Sigmoid colon (tissue), 7 donors: ENCODE measurements at regions of chr9 and their contacts with region 1.

Region 1: GRCh38 chr9:129131300-129132145 is 20.3 kb downstream of the PTPA start:
- DNase-seq: peak; percentile 90
- H3K4me3 ChIP-seq: no peak overlapping the region
- H3K27ac ChIP-seq: peak overlapping the region in 1 of 4 donors; percentile 26
- H3K4me1 ChIP-seq: peaks cover 0 to 6% (median 2%) of the 10 kb centered on the region in 4 donors
- H3K27me3 ChIP-seq: no peaks in the 10 kb centered on the region
- CTCF ChIP-seq: peak; percentile 92 to 99 (median 96)
- EP300 ChIP-seq: no peak
- POLR2A ChIP-seq: no peak

Region 2: DNA sequence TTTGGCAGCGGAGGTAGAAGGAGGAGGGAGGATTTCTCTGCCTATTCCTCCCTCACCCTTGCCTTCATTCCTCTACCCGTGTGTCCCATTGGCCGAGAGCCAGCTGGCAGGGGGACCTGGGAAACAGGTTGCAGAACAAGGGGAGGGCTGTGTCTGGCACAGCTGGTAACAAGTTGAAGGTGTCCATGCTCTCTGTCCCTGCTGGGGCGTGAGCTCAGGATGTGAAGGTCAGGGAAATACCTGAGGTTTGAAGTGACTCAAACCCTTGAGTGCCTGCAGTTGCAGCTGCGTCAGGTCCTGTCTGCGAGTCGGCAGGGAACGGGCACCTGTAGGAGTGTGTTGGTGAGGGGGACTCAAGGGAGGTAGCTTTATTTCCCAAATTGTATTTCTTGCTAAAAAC is 78.9 kb before region 1 on chr9:
- intact Hi-C with region 1: no loop called
- DNase-seq: no peak
- H3K4me3 ChIP-seq: no peak overlapping the region
- H3K27ac ChIP-seq: no peak overlapping the region
- H3K4me1 ChIP-seq: no peaks in the 10 kb centered on the region
- H3K27me3 ChIP-seq: no peaks in the 10 kb centered on the region
- CTCF ChIP-seq: no peak
- EP300 ChIP-seq: no peak
- POLR2A ChIP-seq: no peak

Region 3: GRCh38 chr9:129242941-129243561 is 111.5 kb after region 1 on chr9:
- intact Hi-C with region 1: loop called (anchors 5 kb)
- DNase-seq: peak; percentile 86
- H3K4me3 ChIP-seq: no peak overlapping the region
- H3K27ac ChIP-seq: peak overlapping the region in 2 of 4 donors; percentile 37 to 46
- H3K4me1 ChIP-seq: no peaks in the 10 kb centered on the region
- H3K27me3 ChIP-seq: no peaks in the 10 kb centered on the region
- CTCF ChIP-seq: no peak
- EP300 ChIP-seq: peak in 1 of 4 donors; percentile 13
- POLR2A ChIP-seq: no peak

Region 4: DNA sequence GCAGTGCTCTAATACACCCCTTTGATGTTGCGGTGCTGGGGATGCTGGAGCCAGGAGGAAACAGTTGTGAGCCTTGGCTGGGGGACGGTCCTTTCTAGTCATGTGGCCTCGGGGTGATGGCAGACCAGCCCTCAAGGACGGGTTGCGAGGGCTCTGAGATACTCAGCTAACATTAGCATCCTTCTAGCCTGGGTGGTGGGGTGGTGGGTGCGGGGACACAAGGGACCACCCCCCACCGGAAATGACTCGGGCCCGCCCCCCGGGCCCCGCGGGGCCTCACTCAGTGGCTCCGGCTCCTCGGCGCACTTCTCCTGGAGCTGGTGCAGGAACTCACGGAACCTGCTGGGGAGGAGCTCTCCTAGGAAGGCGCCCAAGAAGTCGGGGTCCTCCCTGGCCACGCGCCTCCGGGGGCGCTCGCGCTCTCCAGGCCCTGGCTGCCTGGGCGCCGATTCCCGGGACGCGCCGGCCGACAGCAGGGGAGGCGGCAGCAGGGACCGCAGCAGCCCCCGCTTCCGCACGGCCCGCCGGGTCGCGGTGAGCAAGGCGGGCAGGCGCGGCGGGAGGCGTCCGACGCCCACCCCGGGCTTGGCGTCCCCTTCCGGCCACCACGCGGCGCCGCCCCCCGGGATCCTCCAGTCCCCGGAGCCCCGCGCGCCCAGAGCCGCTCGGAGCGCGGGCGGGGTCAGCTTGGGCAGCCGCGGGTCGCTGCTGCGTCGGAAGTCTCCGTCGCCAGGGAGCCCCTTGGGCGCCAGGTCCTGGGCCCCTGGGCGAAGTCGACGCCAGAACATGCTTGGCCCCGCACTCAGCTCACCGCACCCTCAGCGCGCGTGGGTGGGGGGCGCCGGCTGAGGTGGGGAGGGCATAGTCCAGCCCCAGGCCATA is 488.5 kb after region 1 on chr9:
- intact Hi-C with region 1: loop called (anchors 2 kb)
- DNase-seq: no peak
- H3K4me3 ChIP-seq: peak overlapping the region; percentile 20 to 80 (median 54)
- H3K27ac ChIP-seq: peak overlapping the region; percentile 33 to 68 (median 48)
- H3K4me1 ChIP-seq: peaks cover 0 to 19% (median 14%) of the 10 kb centered on the region in 4 donors
- H3K27me3 ChIP-seq: no peaks in the 10 kb centered on the region
- CTCF ChIP-seq: no peak
- EP300 ChIP-seq: no peak
- POLR2A ChIP-seq: no peak